Ascending aorta (tissue), 2 donors: ENCODE measurements at regions of chr3 and their contacts with region 1.

Region 1: DNA sequence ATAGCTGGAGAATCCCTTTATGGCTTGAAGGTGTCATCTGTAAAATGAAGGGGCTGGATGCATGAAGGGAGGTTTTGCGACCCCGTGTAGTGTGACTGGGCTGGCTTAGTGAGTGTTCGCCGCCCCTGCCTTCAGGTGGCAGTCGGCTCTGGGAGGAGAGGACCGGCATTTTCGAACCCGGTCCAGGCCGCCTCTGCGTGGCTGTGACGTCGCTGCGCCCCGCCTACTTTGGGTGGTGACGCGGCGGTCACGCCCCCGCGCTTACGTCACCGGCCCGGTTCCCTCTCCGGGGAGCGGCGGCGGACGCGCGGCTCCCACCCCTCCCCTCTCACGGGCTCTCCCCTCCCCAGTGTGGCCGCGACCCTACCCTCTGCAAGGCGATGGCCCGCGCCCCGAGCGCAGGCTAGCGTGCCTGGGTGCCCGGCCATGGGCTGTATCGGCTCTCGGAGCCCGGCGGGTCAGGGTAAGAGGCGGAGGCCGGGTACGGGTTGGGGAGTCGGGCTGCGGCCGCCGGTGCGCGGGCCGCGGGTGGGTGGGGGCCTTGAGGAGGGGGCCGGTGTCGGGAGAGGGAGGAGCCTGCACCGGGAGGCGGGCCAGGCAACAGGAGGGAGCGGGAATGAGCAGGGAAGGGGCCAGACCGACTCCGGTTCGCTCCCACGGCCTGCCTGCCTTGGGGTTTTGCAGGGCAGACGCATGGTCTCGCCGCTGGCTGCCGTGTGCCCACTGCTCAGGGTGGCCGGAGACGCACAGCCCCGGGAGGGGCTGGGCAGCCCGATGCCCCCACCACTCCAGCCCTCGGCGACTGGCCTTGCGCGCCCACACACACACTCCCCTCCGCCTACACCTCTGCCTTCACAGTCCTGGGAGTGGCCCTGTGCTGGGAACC is 1.5 kb upstream of the FAM131A start:
- DNase-seq: peak; percentile 33 to 93
- H3K4me3 ChIP-seq: peak overlapping the region; percentile 88 to 96
- H3K27ac ChIP-seq: peak overlapping the region; percentile 97 to 99
- H3K4me1 ChIP-seq: peaks cover 7 to 16% of the 10 kb centered on the region in 2 donors
- H3K27me3 ChIP-seq: no peaks in the 10 kb centered on the region
- CTCF ChIP-seq: no peak

Region 2: GRCh38 chr3:184174646-184175492 is 161.0 kb before region 1 on chr3 and contains the start of gene AP2M1:
- intact Hi-C with region 1: loop called (anchors 1 kb)
- DNase-seq: peak; percentile 98 to 100
- H3K4me3 ChIP-seq: peak within 1 kb of the TSS; percentile 96 to 97
- H3K27ac ChIP-seq: peak within 1 kb of the TSS; percentile 91 to 96
- H3K4me1 ChIP-seq: peaks cover 11 to 18% of the 10 kb centered on the region in 2 donors
- H3K27me3 ChIP-seq: no peaks in the 10 kb centered on the region
- CTCF ChIP-seq: no peak
- total RNA-seq, gene AP2M1: 101 TPM

Region 3: DNA sequence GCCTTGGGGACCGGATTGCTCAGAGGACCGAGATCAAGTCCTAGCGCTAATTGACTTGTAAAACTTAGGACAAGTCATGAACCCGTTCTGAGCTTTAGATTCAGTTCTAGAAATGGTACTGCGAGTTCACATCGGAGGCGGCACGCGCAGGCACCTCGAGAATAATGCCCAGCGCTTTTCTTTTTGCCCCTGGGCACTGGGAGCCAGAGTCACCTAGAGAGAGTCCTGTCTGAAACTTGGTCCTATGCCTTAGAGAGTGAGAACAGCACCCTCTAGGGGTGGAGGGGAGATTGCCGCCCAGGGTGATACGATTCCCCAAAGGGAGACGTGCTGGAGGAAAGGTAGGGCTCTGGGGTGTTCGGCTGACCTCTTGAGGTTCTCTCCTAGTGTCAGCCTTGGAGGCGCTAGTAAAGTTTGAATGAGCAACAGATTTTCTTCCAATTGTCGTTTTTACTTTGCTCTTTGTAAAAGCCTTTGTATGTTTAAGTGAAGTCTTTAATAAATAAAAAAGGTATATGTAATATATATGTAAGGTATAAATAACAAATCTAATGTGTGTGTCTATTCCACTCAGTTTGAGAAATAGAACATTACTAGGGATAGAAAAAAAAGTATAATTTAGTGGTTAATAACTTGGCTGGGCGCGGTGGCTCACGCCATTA is 85.6 kb before region 1 on chr3:
- intact Hi-C with region 1: loop called (anchors 1 kb)
- DNase-seq: peak; percentile 55 to 94
- H3K4me3 ChIP-seq: peak overlapping the region; percentile 70 to 86
- H3K27ac ChIP-seq: peak overlapping the region in 1 of 2 donors; percentile 45
- H3K4me1 ChIP-seq: peaks cover 0 to 14% of the 10 kb centered on the region in 2 donors
- H3K27me3 ChIP-seq: no peaks in the 10 kb centered on the region
- CTCF ChIP-seq: peak; percentile 78 to 90 (median 88)

Region 4: DNA sequence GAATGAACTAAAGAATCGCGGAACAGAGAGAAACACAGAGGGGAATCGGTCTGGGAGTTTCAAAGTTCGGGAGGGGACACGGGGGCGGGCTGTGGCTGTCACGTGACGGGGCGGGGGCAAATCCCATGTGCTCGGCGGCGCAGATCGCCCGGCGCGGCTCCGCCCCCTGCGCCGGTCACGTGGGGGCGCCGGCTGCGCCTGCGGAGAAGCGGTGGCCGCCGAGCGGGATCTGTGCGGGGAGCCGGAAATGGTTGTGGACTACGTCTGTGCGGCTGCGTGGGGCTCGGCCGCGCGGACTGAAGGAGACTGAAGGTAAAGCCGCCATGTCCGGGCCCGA is 21.6 kb before region 1 on chr3 and contains the start of gene EIF4G1:
- intact Hi-C with region 1: loop called (anchors 1 kb)
- DNase-seq: peak; percentile 78 to 96
- H3K4me3 ChIP-seq: peak within 1 kb of the TSS; percentile 76 to 79
- H3K27ac ChIP-seq: peak within 1 kb of the TSS; percentile 95 to 98
- H3K4me1 ChIP-seq: peaks cover 17 to 33% of the 10 kb centered on the region in 2 donors
- H3K27me3 ChIP-seq: no peaks in the 10 kb centered on the region
- CTCF ChIP-seq: no peak
- total RNA-seq, gene EIF4G1: 192 TPM

Region 5: DNA sequence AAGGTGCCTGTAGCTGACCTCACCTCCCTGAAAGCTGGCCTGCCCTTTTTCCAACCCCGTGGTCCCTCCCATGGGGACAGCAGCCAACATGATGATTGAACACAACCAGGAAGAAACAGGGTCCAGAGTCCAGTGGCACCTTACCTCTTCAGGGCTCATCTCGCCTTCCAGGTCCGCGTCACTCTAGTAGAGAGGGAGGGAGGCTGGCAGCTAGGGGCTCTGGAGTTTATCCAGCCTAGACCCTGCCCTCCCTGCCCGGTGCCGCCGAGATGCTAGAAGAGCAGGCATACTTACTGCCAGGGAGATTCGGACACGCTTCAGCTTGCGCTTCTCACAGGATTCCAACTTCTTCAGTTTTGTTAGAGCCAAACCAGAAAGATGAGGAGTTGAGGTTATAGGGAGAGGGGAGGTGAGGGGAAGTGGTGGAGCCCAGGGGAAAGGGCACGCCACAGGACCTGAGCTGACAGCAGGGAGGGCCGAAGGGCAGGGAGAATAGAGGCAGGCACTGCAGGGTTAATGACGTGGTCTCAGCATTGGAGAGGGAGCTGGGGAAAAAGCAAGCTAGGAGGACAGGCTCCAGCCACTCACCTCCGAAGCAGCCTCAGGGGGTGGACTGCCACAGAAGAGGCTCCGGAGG is 16.4 kb after region 1 on chr3:
- intact Hi-C with region 1: no loop called
- DNase-seq: no peak
- H3K4me3 ChIP-seq: no peak overlapping the region
- H3K27ac ChIP-seq: no peak overlapping the region
- H3K4me1 ChIP-seq: no peaks in the 10 kb centered on the region
- H3K27me3 ChIP-seq: no peaks in the 10 kb centered on the region
- CTCF ChIP-seq: no peak

Region 6: GRCh38 chr3:184362668-184363540 is 27.0 kb after region 1 on chr3:
- intact Hi-C with region 1: loop called (anchors 1 kb)
- DNase-seq: peak; percentile 79 to 98
- H3K4me3 ChIP-seq: peak overlapping the region; percentile 64 to 78
- H3K27ac ChIP-seq: peak overlapping the region; percentile 99 to 100
- H3K4me1 ChIP-seq: peaks cover 5 to 15% of the 10 kb centered on the region in 2 donors
- H3K27me3 ChIP-seq: no peaks in the 10 kb centered on the region
- CTCF ChIP-seq: peak in 2 of 3 experiments; percentile 56 to 68